ENCODE measurements at regions of chr19 and their contacts with region 1.

Region 1: DNA sequence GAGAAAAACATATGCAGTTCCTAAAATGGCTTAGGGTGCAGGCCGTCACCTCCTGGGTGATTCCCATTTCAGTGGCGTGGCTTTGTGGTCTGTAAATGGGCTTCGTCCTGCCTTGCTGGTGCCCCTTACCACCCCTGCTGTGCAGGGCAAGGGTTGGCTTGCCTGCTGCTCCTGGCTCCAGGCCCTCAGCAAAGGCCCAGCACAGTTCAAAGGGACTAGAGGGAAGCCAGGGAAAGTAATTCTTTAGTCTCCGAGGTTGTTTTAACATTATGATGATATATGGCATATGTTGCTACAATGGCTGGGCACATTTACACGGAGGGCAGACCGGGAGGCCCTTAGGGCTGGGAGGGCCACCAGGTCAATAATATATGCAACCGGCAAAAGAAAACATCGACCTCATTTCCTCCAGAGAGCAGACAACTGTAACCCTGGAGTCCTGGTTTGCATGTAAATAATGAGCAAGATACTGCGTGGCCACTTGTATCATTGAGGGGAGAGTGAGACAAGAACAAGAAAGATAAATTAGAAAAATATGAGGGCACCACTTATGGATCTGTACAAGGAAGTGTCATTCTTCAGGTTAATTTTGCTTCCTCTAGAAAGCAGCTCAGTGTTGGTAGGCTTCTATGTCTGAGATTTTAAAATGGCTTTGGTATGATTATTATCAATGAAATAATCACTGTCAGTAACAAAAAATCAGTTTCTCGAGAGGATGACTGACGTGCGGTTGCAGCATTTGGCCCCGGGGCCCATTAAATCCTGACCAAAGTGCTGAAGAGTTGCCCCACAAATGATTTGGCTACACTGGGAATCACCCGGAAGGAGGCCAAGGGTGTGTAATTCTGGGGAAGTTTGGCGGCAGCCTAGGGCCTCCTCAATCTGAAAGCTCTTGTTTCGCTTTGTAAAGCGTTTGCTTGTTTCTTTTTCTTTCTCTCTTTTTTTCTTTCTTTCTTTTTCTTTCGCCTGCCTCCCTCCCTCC is 32.8 kb upstream of the URI1 start:
- DNase-seq: no peak
- H3K4me3 ChIP-seq: no peak overlapping the region
- H3K27ac ChIP-seq: no peak overlapping the region
- H3K4me1 ChIP-seq: no peaks in the 10 kb centered on the region
- H3K27me3 ChIP-seq: no peaks in the 10 kb centered on the region
- CTCF ChIP-seq: no peak
- POLR2A ChIP-seq: no peak

Region 2: GRCh38 chr19:29596885-29597525 is 312.2 kb before region 1 on chr19:
- CTCF ChIA-PET with region 1: no interaction called
- POLR2A ChIA-PET with region 1: interaction called, 10 read pairs
- dilution Hi-C with region 1: no loop called
- intact Hi-C with region 1: no loop called
- DNase-seq: no peak
- H3K4me3 ChIP-seq: no peak overlapping the region
- H3K27ac ChIP-seq: no peak overlapping the region
- H3K4me1 ChIP-seq: no peaks in the 10 kb centered on the region
- H3K27me3 ChIP-seq: no peaks in the 10 kb centered on the region
- CTCF ChIP-seq: no peak
- POLR2A ChIP-seq: no peak

Region 3: DNA sequence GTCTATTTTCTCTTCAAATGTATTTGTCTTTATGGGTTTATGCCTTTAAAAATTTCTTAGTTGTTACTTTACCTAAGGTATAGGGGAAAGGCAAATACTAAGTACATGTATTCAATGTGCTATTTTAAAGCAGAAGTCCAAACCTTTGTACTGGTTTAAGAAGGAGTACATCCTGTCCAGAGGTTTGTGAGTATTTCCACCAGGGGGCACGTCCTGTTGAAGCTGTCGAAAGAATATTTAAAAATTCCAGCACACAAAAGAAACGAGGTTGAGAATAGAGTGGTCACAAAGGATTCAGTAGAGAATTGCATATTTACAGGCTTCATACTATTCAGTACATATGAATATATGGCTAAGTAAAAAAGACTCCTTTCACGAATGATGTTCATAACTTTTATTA is 92.5 kb after region 1 on chr19:
- CTCF ChIA-PET with region 1: no interaction called
- POLR2A ChIA-PET with region 1: no interaction called
- dilution Hi-C with region 1: no loop called
- intact Hi-C with region 1: no loop called
- DNase-seq: peak; percentile 6
- H3K4me3 ChIP-seq: no peak overlapping the region
- H3K27ac ChIP-seq: no peak overlapping the region
- H3K4me1 ChIP-seq: no peaks in the 10 kb centered on the region
- H3K27me3 ChIP-seq: no peaks in the 10 kb centered on the region
- CTCF ChIP-seq: peak in 1 of 2 donors; percentile 10
- POLR2A ChIP-seq: no peak

Measured in endothelial cell of umbilical vein (primary cell).